ENCODE measurements at regions of chr1 and their contacts with region 1.

Region 1: DNA sequence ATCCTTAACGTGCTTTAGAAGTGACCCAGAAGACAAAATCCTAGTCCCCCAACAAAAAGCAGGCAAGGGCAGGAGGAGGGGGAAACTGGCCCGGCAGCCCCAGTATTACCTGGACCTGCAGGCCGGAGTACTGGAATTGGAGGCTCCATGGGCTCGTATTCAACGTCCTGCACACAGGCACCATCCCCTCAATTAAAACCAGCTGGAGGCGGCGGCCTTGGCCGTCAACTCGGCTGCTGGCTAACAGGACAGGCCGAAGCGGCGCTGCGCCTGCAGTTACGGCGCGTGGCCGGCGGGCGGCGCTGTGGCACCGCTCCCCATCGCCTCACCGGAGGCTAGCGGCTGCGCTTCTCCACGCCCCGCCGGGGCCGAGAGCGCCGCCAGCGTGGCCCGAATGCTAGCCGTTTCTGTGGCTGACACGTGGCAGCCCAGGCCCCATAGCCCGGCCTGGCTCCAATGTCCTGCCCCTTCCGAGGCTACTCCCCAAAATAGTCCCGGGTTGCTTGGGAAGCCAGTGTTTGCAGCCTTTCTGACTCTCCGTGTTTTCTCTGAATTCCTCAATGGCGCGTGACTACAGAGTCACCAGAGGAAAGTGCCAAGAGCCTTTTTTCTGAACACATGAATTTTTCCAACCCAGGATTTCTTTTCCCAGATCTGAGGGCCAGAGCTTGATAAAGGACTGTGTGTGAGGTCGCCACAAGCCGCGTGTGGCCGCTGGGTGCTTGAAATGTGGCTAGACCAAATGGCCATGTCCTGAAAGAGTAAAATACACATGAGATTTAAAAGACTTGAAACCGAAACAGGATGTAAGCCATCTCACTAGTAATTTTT is 82.5 kb downstream of the HHIPL2 start:
- DNase-seq: peak; percentile 92
- CTCF ChIP-seq: peak; percentile 100

Region 2: DNA sequence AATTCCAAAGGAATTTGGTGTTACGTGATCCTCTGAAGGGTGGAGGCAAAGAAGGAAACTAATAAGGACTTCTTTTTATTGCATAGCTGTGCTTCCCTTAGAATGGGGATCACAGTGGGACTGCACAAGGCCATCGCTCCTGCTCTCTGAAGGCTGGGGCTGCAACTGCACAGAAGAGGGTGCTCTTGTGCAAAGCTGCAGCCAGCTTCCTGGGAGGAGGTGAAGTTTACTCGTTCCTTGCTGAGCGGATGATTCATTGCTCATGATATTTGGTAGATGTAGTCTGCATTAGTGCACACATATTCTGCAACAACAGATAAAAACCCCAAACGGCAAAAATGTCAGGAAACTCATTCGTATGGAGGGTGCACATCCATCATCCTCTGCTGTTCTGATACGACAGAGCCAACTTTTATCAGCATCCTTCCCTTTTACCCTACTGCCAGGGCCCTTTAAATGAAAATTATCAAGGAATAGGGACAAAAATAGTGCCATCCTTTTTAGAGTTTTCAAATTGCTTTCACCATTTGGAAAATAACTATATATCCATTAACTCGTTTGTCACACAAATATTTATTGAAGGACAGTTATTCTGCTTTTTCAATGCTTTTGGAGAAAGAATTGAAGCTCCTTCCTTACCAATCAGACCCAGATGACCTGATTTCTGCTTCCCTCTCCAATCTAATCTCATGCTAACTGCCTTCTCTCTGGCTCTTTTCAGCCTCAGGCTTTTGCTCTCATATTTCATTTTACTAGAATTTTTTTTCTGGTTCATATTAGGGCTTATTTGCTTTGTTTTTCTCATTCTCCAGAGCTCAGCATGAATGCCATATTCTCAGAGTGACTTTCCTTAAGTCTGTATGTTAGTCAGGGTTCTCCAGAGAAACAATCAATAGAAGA is 987.1 kb before region 1 on chr1:
- in situ Hi-C with region 1: loop called (anchors 25 kb)
- DNase-seq: peak; percentile 22
- CTCF ChIP-seq: peak; percentile 64

Region 3: GRCh38 chr1:221761354-221762002 is 703.9 kb before region 1 on chr1:
- in situ Hi-C with region 1: loop called (anchors 25 kb)
- DNase-seq: peak; percentile 37
- CTCF ChIP-seq: no peak

Region 4: GRCh38 chr1:222521299-222522104 is 56.1 kb after region 1 on chr1:
- in situ Hi-C with region 1: no loop called
- DNase-seq: no peak
- CTCF ChIP-seq: no peak

Region 5: GRCh38 chr1:222634180-222635013 is 169.0 kb after region 1 on chr1:
- in situ Hi-C with region 1: loop called (anchors 5 kb)
- DNase-seq: peak; percentile 65
- CTCF ChIP-seq: peak; percentile 82

Region 6: DNA sequence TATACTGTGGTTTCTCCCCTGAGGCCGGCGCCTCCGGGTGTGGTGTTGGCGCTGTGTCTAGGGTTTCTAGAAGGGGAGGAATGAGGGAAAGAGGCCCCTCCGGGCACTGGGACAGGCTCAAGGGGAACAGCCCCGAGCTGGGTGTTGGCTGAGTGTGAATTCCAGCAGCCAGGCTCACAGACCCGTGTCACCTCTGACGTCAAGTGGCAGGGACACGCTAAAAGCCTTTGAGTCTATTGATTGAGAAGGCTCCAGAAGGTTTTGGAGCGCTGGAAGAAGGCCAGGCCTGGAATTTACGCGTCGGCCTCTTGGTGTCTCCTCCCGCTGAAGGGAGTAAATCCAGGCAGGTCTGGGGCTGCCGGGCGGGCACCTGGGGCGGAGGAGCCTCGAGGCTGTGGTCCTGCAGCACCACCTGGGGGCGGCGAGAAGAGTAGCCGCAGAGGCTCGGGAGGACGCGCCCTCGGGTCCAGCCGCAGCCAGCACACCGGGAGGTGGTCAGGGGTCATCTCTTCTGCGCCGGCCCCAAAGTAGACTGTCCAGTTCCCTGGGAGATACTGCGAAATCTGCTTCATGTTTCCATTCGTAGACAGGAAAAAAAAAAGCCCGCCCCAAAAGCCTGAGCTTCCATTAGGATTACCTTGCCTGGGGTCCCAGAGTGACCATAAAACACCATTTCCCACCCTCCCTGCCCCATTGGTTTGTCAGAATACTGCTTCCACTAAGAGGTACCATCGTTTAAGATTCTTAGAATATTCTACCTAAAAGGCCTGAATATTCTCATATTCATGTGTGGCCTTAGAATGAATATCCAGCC is 616.0 kb after region 1 on chr1:
- in situ Hi-C with region 1: loop called (anchors 25 kb)
- DNase-seq: peak; percentile 90
- CTCF ChIP-seq: peak; percentile 94

Measured in GM13976 (cell line).